Activated naive CD4-positive, alpha-beta T cell treated with anti-CD3 and anti-CD28 coated beads for 36 hours (primary cell): ENCODE measurements at regions of chr14 and their contacts with region 1.

Region 1: GRCh38 chr14:103104654-103105452 is 10.3 kb downstream of the EXOC3L4 start:
- DNase-seq: peak; percentile 71
- H3K4me3 Mint-ChIP-seq: no peak overlapping the region
- H3K27ac Mint-ChIP-seq: no peak overlapping the region
- H3K4me1 Mint-ChIP-seq: peaks cover 11% of the 10 kb centered on the region
- H3K27me3 Mint-ChIP-seq: peaks cover 34% of the 10 kb centered on the region

Region 2: DNA sequence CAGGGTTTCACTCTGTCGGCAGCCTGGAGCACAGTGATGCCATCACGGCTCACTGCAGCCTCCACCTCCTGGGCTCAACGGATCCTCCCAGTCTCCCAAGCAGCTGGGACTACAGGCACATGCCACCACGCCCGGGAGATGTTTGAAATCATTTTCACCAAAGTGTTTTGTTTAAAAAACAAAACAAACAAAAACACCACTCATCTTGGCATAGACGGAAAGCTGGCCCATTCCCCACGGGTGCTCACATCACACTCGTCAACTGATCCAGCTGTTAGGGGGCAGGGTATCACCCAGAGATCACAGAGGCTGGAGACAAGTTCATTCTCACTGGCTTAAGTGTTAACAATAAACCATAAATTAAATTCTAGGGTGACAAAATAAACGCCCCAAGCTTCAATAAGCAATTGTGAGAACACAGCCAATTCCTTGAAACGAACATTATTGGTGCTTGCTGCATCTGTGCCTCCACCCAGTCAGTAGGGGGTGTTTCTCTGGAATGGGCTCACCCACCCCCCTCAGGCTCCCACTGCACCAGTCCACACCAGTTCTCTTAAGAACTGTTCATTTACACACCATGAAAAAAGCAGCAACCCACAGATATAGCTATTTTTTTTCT is 82.4 kb before region 1 on chr14:
- CTCF ChIA-PET with region 1: no interaction called
- intact Hi-C with region 1: no loop called
- DNase-seq: no peak
- H3K4me3 Mint-ChIP-seq: no peak overlapping the region
- H3K27ac Mint-ChIP-seq: no peak overlapping the region
- H3K4me1 Mint-ChIP-seq: no peaks in the 10 kb centered on the region
- H3K27me3 Mint-ChIP-seq: peaks cover 7% of the 10 kb centered on the region

Region 3: DNA sequence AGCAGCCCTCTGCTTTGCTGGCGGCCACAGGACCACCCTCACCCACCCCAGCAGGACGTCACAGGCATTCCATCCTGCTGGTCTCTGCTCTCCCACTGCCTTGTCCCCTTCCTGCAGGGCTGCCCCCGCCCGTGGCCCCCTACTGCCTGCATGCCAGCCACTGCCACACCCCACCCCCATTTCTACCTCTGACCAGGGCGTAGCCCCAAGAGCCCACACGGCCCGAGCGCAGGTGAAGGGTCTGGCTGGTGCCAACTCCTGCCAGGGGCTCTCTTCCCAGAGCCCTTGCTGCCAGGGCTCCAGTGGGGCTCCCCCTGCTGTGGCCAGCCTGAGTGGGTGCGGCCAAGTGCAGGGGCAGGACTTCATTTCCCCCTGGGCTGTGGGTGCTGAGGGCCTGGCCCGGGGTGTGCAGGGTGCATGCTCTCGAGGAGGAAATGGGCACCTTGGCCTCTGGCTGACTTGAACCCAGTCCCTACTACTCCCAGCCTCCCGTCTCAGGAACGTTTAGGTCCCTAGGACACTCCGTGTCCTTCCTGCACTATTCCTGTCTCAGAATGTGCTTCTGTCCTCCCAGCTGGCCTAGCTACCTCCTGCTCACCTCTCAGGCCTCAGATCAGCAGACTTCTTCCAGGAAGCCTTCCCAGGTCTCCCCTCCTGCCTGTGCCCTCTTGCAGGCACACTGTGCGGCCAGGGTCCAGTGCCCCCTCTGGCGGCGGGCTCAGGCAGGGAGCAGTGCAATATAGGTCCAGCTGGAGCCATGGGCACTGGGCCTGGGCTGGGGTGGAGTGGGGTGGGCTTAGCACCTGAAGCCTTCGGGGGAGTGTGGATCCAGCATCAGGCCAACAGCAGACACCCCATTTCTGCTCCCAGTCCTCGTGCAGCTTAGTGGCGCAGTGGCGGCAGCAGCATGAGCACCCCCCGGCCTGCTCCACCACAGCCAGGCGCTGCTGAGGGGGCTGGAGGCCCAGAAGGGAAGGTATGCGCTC is 19.5 kb before region 1 on chr14:
- CTCF ChIA-PET with region 1: interaction called, 15 read pairs
- intact Hi-C with region 1: no loop called
- DNase-seq: no peak
- H3K4me3 Mint-ChIP-seq: no peak overlapping the region
- H3K27ac Mint-ChIP-seq: no peak overlapping the region
- H3K4me1 Mint-ChIP-seq: no peaks in the 10 kb centered on the region
- H3K27me3 Mint-ChIP-seq: peaks cover 7% of the 10 kb centered on the region

Region 4: DNA sequence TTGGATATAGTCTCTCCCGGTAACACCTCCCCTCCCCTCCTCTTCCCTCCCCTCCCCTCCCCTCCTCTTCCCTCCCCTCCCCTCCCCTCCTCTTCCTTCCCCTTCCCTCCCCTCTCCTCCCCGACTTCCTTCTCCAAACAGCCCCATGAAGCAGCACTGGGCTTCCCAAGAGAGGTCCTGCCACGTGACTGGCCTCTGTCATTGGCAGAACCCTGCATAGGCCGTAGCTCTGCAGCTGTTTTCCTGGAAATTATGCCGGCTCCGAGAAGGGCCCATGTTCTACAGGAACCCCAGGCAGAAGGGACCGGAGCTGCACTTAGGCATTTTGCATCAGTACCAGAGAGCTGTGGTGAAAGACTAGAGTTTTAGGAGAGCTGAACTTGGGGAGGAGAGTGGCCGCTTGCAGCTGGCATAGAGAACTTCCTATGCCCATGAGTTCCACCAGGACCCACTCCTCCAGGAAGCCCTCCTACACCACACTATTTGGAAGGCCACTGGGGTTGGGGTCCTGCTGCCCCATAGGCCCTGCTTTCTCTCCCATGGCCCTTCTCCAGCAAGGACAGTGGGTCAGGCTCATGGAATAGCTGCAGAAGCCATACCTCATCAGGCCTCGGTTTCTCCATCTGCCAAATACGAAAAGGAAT is 13.3 kb after region 1 on chr14:
- CTCF ChIA-PET with region 1: interaction called, 17 read pairs
- intact Hi-C with region 1: no loop called
- DNase-seq: no peak
- H3K4me3 Mint-ChIP-seq: no peak overlapping the region
- H3K27ac Mint-ChIP-seq: no peak overlapping the region
- H3K4me1 Mint-ChIP-seq: peaks cover 7% of the 10 kb centered on the region
- H3K27me3 Mint-ChIP-seq: peaks cover 15% of the 10 kb centered on the region

Region 5: DNA sequence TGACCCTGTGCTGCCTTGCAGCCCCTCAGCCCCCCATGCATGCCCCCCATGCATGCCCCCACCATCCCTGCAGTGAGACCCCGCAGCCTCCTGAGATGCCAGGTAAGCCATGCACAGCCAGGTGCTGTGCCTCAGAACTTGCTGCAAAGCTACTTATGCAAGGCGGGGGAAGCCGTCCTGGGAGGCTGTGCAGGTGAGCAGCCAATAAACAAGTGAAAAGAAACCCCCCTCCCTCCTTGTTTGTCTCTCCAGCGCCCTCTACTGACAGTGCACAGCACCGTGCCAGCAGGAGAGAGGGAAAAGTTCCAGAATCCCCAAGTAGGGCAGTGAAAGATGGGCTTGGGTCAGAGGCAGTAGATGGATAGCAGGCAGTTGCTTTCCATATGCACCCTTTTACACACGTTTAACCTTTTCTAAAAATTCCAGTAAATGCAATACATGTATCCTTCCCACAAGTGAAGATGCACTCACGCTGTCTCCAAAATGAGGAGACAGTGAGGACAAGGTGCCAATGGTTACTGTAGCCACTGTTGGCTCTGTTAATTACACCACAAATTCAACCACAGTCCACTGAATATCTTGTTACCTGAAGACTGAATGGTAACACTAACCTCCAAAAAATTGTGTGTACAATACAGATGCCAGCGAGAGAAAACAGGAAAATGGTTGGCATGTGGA is 36.4 kb after region 1 on chr14:
- CTCF ChIA-PET with region 1: interaction called, 12 read pairs
- intact Hi-C with region 1: loop called (anchors 1 kb)
- DNase-seq: peak; percentile 73
- H3K4me3 Mint-ChIP-seq: no peak overlapping the region
- H3K27ac Mint-ChIP-seq: no peak overlapping the region
- H3K4me1 Mint-ChIP-seq: peaks cover 3% of the 10 kb centered on the region
- H3K27me3 Mint-ChIP-seq: peaks cover 35% of the 10 kb centered on the region

Region 6: GRCh38 chr14:103292426-103293374 is 187.8 kb after region 1 on chr14:
- CTCF ChIA-PET with region 1: interaction called, 46 read pairs
- intact Hi-C with region 1: loop called (anchors 1 kb)
- DNase-seq: peak; percentile 88
- H3K4me3 Mint-ChIP-seq: no peak overlapping the region
- H3K27ac Mint-ChIP-seq: no peak overlapping the region
- H3K4me1 Mint-ChIP-seq: no peaks in the 10 kb centered on the region
- H3K27me3 Mint-ChIP-seq: peaks cover 8% of the 10 kb centered on the region